ENCODE measurements at regions of chr1 and their contacts with region 1.

Region 1: GRCh38 chr1:239418681-239419080 is 32.3 kb downstream of the CHRM3 start:
- DNase-seq: no peak
- H3K4me3 ChIP-seq: no peak overlapping the region
- H3K27ac ChIP-seq: no peak overlapping the region
- H3K4me1 ChIP-seq: no peaks in the 10 kb centered on the region
- H3K27me3 ChIP-seq: no peaks in the 10 kb centered on the region
- CTCF ChIP-seq: no peak
- POLR2A ChIP-seq: no peak

Region 2: GRCh38 chr1:237864338-237865244 is 1554.1 kb before region 1 on chr1:
- intact Hi-C with region 1: loop called (anchors 10 kb)
- DNase-seq: peak; percentile 81
- H3K4me3 ChIP-seq: peak overlapping the region in 1 of 8 donors; percentile 28
- H3K27ac ChIP-seq: no peak overlapping the region
- H3K4me1 ChIP-seq: peaks cover 0 to 9% (median 5%) of the 10 kb centered on the region in 6 donors
- H3K27me3 ChIP-seq: peaks cover 0 to 10% (median 0%) of the 10 kb centered on the region in 7 donors
- CTCF ChIP-seq: peak in 10 of 11 experiments; percentile 21 to 74 (median 62)
- POLR2A ChIP-seq: no peak